ENCODE measurements at regions of chr9 and their contacts with region 1.

Region 1: GRCh38 chr9:2336055-2336454 is 285.5 kb upstream of the VLDLR start:
- DNase-seq: no peak
- CTCF ChIP-seq: peak; percentile 40

Region 2: DNA sequence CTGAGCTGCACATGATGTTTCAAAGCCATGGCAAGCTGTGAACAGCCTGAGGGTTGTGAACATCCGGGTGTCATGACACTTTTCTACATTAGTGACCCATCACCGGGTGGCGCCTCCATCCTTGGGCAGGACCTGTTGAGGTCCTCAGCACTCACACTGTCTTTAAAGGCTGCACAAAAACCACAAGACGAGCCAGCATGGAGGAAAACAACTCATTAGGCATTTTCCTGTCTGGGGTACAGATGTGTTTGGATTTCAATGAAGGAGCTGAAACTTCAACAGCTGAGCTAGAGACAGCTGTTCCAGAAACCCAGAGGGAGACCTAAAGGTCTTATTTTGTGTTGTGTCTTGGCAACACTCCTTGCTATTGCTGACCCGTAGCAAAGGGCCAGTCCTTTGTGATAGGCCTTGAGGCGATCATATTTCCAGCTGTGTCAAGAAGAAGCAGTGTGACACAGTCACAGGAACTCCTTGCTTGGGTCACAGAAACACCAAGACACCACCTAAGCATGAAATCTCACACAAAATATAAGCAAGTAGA is 133.7 kb after region 1 on chr9:
- in situ Hi-C with region 1: no loop called
- DNase-seq: no peak
- CTCF ChIP-seq: peak; percentile 26

Region 3: GRCh38 chr9:2722715-2723114 is 386.7 kb after region 1 on chr9:
- in situ Hi-C with region 1: loop called (anchors 25 kb)
- DNase-seq: no peak
- CTCF ChIP-seq: no peak

Region 4: GRCh38 chr9:2787065-2787464 is 451.0 kb after region 1 on chr9:
- in situ Hi-C with region 1: no loop called
- DNase-seq: no peak
- CTCF ChIP-seq: no peak

Region 5: DNA sequence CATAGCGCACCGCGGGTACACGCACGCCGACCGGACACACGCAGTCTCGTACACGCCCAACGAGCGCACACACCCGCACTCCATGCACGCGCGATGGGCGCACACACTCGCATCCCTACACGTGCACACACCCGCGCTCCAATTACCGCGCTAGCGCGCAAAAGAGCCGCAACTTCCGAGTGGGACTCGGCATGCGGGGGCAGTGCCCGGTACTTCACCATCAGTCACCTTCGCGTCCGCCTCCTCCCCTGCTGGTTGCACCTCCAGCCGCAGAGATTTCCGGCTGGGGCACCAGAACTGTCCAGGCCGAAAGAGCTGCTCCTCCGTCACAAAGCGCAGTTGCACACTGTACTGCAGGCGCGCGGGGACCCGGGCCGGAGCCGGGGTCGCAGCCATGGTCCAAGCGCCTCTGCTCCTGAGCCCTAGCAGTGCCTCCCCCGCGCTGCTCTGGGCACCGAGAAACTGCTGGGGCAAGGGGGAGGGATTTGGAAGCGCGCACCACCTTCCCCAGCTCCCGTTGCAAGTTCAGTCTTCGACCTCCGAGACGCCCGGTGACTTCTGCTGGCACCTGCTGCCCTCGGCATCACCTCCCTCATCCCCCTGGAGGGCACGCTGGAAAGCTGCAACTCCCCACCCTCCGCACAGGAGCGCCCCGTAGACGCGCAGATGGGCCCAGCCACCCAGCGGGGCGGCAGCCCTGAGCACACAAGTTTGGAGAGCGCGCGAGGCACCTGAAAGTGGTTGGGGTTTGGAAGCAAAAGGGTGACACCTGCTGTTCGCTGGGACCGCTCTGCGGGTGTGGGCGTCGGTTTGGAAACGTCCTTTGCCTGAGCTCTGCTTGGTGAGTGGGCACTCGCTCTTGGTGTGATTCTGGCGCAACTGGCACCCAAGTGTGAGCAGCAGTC is 845.2 kb after region 1 on chr9:
- in situ Hi-C with region 1: no loop called
- DNase-seq: peak; percentile 57
- CTCF ChIP-seq: peak; percentile 47

Measured in GM13977 (cell line).